Ascending aorta (tissue), 2 donors: ENCODE measurements at regions of chr12 and their contacts with region 1.

Region 1: GRCh38 chr12:68745904-68746571 is at the start of gene SLC35E3:
- DNase-seq: peak; percentile 68 to 94
- H3K4me3 ChIP-seq: peak within 1 kb of the TSS; percentile 66 to 85
- H3K27ac ChIP-seq: peak within 1 kb of the TSS; percentile 72 to 75
- H3K4me1 ChIP-seq: peaks cover 0 to 7% of the 10 kb centered on the region in 2 donors
- H3K27me3 ChIP-seq: no peaks in the 10 kb centered on the region
- CTCF ChIP-seq: no peak
- total RNA-seq, gene SLC35E3: 2.0 TPM

Region 2: GRCh38 chr12:68331869-68332727 is 413.9 kb before region 1 on chr12 and contains the start of gene MDM1:
- intact Hi-C with region 1: loop called (anchors 1 kb)
- DNase-seq: peak; percentile 94 to 99
- H3K4me3 ChIP-seq: peak within 1 kb of the TSS; percentile 77 to 88
- H3K27ac ChIP-seq: peak within 1 kb of the TSS; percentile 58 to 66
- H3K4me1 ChIP-seq: peaks cover 0 to 8% of the 10 kb centered on the region in 2 donors
- H3K27me3 ChIP-seq: no peaks in the 10 kb centered on the region
- CTCF ChIP-seq: no peak
- total RNA-seq, gene MDM1: 9.5 TPM

Region 3: GRCh38 chr12:68939505-68939904 is 193.5 kb after region 1 on chr12:
- intact Hi-C with region 1: no loop called
- DNase-seq: no peak
- H3K4me3 ChIP-seq: no peak overlapping the region
- H3K27ac ChIP-seq: no peak overlapping the region
- H3K4me1 ChIP-seq: no peaks in the 10 kb centered on the region
- H3K27me3 ChIP-seq: no peaks in the 10 kb centered on the region
- CTCF ChIP-seq: no peak